Esophagus muscularis mucosa (tissue), 4 donors: ENCODE measurements at regions of chr10 and their contacts with region 1.

Region 1: DNA sequence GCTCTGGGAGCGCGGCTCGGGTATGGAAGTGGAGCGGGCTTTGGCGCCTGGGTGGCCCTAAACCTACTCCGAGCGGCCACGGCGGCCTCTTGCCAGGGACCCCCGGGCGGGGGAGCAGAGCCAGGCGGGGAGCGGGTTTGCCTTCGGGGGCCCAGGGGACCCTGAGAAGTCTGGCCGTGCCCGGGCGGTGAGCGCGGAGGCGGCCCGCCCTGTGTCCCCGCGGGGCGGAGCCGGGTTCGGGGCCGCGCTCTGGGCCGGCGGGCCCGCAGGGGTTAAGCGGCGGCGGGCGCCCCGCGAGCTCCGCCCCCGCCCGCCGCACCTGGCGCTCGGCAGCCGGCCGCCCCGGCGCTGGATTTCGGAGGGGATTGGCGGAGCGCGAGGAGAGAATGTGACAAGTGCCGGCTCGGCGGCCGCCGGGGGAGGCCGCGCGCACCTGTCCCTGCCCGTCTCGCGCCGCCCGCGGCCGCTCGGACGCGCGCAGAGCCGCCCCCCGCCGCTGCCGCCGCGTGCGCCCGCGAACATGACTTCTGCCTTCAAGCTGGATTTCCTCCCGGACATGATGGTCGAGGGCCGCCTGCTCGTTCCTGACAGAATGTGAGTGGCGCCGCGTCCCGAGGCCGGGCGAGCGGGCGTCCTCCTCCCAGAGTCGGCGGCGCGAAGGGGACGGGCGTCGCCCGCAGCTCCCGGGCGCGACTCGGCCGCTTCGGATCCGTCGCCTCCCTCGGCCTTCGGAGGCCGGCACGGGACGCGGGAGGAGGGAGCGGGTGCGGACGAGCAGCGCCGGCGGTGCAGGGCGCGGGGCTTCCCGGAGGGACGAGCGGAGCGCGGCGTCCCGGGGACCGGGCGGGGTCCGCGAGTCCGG is at the start of gene CELF2:
- DNase-seq: no peak
- H3K4me3 ChIP-seq: peak within 1 kb of the TSS; percentile 84 to 95 (median 92)
- H3K27ac ChIP-seq: peak within 1 kb of the TSS; percentile 86 to 93 (median 90)
- H3K4me1 ChIP-seq: peaks cover 24 to 58% (median 47%) of the 10 kb centered on the region in 4 donors
- H3K27me3 ChIP-seq: no peaks in the 10 kb centered on the region
- CTCF ChIP-seq: no peak
- EP300 ChIP-seq: no peak
- POLR2A ChIP-seq: peak; percentile 19
- total RNA-seq, gene CELF2: 81.8 to 128 (median 104) TPM

Region 2: GRCh38 chr10:10792681-10793080 is 225.1 kb before region 1 on chr10:
- intact Hi-C with region 1: loop called (anchors 10 kb)
- DNase-seq: no peak
- H3K4me3 ChIP-seq: no peak overlapping the region
- H3K27ac ChIP-seq: no peak overlapping the region
- H3K4me1 ChIP-seq: peaks cover 12 to 53% (median 38%) of the 10 kb centered on the region in 4 donors
- H3K27me3 ChIP-seq: no peaks in the 10 kb centered on the region
- CTCF ChIP-seq: no peak
- EP300 ChIP-seq: no peak
- POLR2A ChIP-seq: no peak

Region 3: GRCh38 chr10:11097686-11098085 is 79.9 kb after region 1 on chr10:
- intact Hi-C with region 1: no loop called
- DNase-seq: no peak
- H3K4me3 ChIP-seq: no peak overlapping the region
- H3K27ac ChIP-seq: no peak overlapping the region
- H3K4me1 ChIP-seq: peaks cover 16 to 45% (median 19%) of the 10 kb centered on the region in 4 donors
- H3K27me3 ChIP-seq: no peaks in the 10 kb centered on the region
- CTCF ChIP-seq: no peak
- EP300 ChIP-seq: no peak
- POLR2A ChIP-seq: no peak